BJ (cell line): ENCODE measurements at regions of chr1 and their contacts with region 1.

Region 1: DNA sequence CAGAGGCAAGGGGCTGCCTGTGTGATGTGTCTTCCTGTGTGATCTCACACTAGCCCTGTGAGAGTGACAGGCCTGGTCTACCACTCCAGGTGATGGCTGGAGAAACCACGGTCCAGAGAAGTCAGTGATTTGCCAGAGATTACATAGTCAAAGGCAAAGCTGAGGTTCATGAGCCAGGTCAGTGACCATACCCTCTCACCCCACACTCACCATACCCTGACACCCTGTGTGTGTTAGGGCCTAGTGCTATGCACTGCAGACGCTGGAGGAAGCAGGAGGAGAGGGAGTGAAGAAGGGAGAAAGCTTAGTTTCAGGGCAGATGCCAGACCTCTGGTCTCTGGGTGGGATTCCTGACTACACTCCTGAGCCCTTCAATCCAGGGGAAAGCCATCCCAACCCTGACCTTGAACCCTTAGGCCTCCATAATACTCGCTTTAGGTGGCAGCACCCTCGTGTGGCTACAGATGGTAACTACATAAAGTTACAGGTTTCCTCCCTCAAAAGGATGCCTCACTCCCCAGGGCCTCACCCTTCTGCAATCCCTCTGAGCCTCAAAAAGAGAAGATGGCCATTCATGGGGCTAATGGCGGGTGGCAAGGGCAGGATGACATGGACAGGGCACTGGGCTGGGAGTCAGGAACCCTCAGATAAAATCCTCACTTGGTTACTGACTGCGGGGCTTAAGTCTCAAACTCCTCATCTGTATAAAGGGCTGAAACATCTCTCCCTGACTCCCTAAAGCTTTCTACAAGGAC is 20.8 kb upstream of the SDC3 start:
- DNase-seq: no peak
- H3K4me3 ChIP-seq: no peak overlapping the region
- H3K27me3 ChIP-seq: no peaks in the 10 kb centered on the region
- CTCF ChIP-seq: peak; percentile 74

Region 2: DNA sequence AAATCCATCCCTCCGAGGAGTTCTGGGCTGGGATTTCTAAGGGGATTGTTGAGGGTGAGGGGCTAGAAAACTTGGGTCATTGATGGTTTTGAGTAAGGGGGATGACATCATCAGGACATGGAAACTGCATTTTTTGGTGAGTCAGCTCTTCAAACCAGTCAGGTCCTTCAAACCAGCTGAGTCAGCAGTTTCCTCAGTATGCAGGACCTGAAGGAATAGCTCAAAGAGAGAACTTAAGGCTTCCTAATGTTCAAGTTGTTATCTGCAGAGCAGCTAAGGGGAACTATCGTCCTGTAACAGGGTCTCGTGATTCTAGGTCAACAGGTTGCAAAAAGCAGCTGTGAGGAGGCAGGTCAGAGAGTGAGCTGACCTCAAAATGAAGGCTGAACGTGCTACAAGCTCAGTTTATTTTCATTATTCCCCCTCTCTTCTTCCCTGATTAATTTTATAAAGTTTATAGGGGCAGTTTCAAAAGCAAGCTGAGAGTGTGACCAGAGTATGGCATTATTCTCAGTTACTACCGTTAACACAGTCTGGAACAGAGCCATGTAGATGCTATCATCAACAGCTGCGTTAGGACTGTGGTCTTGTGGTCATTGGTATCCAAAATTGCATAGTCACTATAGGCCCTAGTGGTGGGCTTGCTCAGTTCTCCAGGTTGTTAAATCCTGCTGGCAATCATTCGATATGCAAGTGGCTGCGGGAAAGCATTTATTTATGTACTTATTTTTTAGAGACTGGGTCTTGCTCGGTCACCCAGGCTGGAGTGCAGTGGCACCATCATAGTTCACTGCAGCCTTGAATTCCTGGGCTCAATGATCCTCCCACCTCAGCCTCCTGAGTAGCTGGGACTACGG is 10.1 kb before region 1 on chr1:
- CTCF ChIA-PET with region 1: interaction called, 21 read pairs
- POLR2A ChIA-PET with region 1: no interaction called
- DNase-seq: no peak
- H3K4me3 ChIP-seq: no peak overlapping the region
- H3K27me3 ChIP-seq: no peaks in the 10 kb centered on the region
- CTCF ChIP-seq: no peak

Region 3: GRCh38 chr1:30940541-30940940 is 11.2 kb after region 1 on chr1:
- CTCF ChIA-PET with region 1: interaction called, 10 read pairs
- POLR2A ChIA-PET with region 1: no interaction called
- DNase-seq: no peak
- H3K4me3 ChIP-seq: no peak overlapping the region
- H3K27me3 ChIP-seq: no peaks in the 10 kb centered on the region
- CTCF ChIP-seq: no peak